HEK293 (cell line): ENCODE measurements at regions of chr22 and their contacts with region 1.

Region 1: DNA sequence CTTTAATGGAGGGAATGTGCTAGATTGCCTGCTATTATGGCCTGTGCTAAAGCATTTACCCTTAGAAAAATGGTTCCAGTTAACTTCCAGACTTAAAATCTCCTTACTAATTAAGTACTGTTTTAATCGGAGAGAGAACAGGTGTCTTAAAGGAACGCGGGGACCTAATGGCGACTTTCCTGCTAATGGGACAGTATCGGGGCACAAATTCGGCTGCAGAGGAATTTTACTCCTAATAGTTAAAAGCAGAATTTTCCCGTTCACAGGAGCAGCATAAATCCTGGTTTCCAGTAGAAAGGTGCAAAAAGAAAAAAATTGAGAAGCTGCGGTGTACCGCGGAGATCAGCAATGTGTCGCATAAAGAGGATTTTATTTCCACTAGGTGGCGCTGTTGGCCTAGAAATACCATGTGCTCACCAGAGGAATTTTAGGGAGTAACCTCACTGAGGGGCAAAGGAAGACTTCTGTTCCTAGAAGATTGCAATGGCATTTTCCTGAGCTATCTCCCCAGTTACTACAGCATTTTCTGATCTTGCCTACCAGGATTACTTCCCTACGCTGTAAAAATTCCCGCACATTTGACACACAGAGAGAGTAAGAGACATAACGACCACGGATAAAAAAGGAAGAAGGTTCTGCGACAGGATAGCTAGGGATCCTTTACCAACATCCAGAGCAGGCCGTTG is 44.5 kb downstream of the ZNF280B start:
- H3K4me3 ChIP-seq: no peak overlapping the region
- H3K27ac ChIP-seq: no peak overlapping the region
- H3K4me1 ChIP-seq: no peaks in the 10 kb centered on the region
- CTCF ChIP-seq: peak; percentile 77

Region 2: DNA sequence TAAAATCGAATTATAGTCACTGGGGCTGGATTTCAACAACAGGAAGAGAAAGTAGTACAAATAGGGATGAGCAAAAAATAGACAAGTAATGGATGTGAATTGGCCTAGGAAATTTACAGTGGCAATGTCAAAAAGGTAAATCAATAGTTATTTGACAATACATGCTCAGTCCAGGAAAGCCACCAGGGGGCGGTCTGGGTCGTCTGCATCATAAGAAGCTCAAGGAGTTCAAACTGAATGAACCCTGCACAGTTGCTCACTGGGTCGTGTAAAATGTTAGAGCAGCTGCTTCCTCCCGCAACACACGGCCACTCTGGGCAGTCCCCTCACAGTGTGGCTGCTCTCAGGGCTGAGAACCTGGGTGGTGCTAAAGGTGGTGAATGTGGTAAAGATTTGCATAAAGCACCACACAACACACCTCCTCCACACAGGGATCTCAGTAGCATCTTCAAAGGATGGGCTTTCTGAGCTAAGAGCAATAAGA is 41.3 kb before region 1 on chr22:
- CTCF ChIA-PET with region 1: interaction called, 14 read pairs
- POLR2A ChIA-PET with region 1: no interaction called
- H3K4me3 ChIP-seq: no peak overlapping the region
- H3K27ac ChIP-seq: no peak overlapping the region
- H3K4me1 ChIP-seq: no peaks in the 10 kb centered on the region
- CTCF ChIP-seq: peak; percentile 53; the same call in 1 of the 2 replicates

Region 3: DNA sequence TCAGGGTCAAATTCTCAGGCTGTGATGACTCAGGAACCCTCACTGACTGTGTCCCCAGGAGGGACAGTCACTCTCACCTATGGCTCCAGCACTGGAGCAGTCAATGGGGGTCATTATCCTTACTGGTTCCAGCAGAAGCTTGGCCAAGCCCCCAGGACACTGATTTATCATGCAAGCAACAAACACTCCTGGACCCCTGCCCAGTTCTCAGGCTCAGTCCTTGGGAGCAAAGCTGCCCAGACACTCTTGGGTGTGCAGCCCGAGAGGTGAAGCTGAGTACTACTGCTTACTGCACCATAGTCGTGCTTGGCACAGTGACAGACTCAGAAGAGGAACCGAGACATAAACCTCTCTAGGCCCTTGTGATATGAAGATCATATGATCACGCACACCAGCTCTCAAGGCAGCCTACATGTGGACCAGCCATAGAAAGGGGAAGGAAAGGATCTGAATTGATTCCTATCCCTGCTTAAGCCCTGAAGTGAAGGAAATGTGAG is 13.6 kb before region 1 on chr22:
- CTCF ChIA-PET with region 1: interaction called, 64 read pairs
- POLR2A ChIA-PET with region 1: no interaction called
- H3K4me3 ChIP-seq: no peak overlapping the region
- H3K27ac ChIP-seq: no peak overlapping the region
- H3K4me1 ChIP-seq: no peaks in the 10 kb centered on the region
- CTCF ChIP-seq: no peak

Region 4: GRCh38 chr22:22576244-22576988 is 112.4 kb after region 1 on chr22:
- CTCF ChIA-PET with region 1: interaction called, 21 read pairs
- POLR2A ChIA-PET with region 1: no interaction called
- H3K4me3 ChIP-seq: no peak overlapping the region
- H3K27ac ChIP-seq: no peak overlapping the region
- H3K4me1 ChIP-seq: no peaks in the 10 kb centered on the region
- CTCF ChIP-seq: peak; percentile 61; the same call in 1 of the 2 replicates

Region 5: GRCh38 chr22:22745225-22746060 is 281.4 kb after region 1 on chr22:
- CTCF ChIA-PET with region 1: interaction called, 15 read pairs
- POLR2A ChIA-PET with region 1: no interaction called
- H3K4me3 ChIP-seq: no peak overlapping the region
- H3K27ac ChIP-seq: no peak overlapping the region
- H3K4me1 ChIP-seq: no peaks in the 10 kb centered on the region
- CTCF ChIP-seq: peak; percentile 57; the same call in 1 of the 2 replicates

Region 6: GRCh38 chr22:22818861-22819855 is 355.2 kb after region 1 on chr22:
- CTCF ChIA-PET with region 1: no interaction called
- POLR2A ChIA-PET with region 1: no interaction called
- H3K4me3 ChIP-seq: no peak overlapping the region
- H3K27ac ChIP-seq: no peak overlapping the region
- H3K4me1 ChIP-seq: no peaks in the 10 kb centered on the region
- CTCF ChIP-seq: no peak